ENCODE measurements at regions of chr5 and their contacts with region 1.

Region 1: DNA sequence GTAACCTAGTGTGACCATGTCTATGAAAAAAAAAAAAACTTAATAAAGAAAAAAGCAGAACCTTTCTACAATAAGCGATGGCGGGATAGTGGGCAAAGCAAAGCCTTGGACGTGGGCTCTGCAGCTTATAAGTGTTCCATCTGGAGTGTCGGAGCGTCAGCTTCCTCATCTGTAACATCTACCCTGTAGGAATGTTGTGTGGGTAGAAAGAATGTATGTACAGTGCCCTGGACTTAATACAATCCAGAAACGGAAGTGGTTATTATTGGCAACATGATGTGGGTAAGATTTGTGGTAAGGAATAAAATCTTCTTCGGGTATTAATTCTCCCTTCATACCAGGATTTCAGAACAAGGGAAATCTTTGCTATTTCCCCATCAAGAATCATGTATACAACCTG is 66.5 kb downstream of the SEMA5A start:
- DNase-seq: no peak
- ATAC-seq: no peak

Region 2: GRCh38 chr5:9502050-9502834 is 22.9 kb after region 1 on chr5:
- intact Hi-C with region 1: loop called (anchors 2 kb)
- DNase-seq: no peak
- ATAC-seq: peak; percentile 55

Measured in sciatic nerve (tissue), 2 donors.